ENCODE measurements at regions of chr5 and their contacts with region 1.

Region 1: GRCh38 chr5:151115274-151115905 is 34.6 kb upstream of the TNIP1 start:
- DNase-seq: peak; percentile 88
- ATAC-seq: peak; percentile 68

Region 2: GRCh38 chr5:151002250-151002649 is 113.1 kb before region 1 on chr5:
- intact Hi-C with region 1: loop called (anchors 2 kb)
- DNase-seq: no peak
- ATAC-seq: no peak

Region 3: DNA sequence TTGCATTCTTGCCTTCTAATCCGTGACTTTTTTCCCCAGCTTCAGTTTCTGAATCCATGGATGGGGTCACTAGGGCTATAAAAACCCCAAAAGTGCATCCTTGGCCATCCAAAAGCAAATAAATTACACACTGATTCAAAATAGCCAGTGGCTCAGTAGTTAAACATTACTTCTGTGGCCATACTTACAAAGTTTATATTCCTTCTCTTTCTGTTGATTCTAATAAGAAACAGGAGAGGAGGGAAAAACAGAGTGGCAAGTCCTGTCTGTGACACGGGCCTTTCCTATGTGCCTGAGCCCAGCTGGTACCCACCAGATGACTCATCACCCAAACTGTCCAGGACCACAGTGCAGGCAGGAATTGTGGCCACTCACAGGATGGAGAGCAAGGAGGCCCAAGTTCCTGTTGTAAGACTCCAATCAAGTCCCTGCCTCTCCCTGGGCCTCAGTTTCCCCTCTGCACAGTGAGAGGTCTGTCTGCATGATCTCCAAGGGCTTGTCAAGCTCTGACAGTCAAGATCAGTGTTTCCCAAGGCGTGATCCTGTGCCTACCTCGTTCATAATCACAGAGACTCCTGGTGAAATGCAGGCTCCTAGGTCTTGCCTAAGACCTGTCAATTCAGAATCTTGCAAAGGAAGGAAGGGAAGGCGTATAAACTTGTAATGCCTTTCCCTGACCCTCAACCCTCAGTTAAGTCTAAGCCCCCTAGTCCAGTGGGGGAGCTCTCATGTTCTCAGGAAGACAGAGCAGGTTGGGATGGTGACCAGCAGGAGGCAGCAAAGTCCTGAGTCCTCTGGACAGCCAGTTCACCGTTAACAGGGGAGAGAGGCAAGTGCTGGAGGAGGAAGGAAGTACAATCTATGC is 64.1 kb before region 1 on chr5:
- intact Hi-C with region 1: loop called (anchors 1 kb)
- DNase-seq: peak; percentile 85
- ATAC-seq: peak; percentile 83

Region 4: DNA sequence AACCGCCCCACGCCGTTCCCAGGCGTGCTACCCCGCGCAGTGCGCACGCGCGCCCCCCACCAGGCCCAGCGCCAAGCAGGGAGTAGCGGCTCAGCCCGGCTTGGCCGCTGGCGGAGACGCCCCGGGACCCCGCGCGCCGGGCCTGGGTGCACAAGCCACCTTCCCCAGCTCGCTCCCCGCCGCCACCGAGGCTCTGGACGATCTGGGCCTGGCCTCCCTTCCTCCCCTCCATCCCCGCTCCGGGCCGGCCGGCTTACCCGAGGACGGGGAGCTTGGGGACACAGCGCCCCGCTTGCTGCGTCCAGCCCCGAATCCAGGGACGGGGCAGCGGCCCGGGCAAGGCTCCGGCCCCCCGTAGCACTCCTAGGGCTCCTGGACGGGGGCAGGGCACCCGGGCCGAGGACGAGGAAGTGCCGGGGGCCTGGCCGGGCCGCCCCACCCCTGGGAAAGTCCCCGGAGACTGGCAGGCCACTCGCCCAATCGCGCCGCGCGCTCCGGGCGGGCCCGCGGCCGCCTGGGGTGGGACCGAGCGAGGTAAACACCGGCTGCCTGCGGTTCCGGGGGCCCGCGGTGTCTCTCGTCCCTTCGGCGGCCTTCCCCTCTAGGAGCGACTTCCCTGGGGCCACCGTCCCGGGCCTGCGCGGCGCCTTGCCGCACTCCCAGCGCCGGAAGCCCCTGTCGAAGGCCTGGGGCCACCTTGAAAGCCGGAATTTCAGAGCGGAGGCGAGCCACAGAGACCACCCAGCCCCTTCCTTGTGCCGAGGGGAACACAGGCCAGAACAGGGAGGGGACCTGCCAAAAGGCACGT is 34.6 kb before region 1 on chr5 and contains the start of gene TNIP1:
- intact Hi-C with region 1: loop called (anchors 2 kb)
- DNase-seq: peak; percentile 95
- ATAC-seq: peak; percentile 96
- total RNA-seq, gene TNIP1: 114 TPM

Region 5: GRCh38 chr5:151202381-151203139 is 87.2 kb after region 1 on chr5:
- intact Hi-C with region 1: no loop called
- DNase-seq: no peak
- ATAC-seq: peak; percentile 52